ENCODE measurements at regions of chr19 and their contacts with region 1.

Region 1: DNA sequence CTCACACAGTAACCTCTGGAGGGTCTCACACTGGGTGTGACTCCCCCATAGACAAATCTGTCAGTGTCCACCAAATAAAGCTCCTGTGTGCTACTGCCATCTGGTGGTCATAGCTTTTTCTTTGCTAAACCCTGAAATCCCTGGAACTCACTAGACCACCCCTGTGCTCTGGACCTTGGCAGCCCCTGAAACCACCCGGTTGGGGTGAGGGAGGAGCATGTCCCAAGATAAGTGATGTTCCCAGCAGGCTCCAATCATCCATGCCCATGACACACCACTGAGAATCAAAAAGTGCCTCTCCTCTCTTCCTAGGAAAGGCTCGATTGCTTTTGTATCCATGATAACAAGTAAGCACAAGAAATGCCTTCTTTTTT is 6.5 kb upstream of the HSD17B14 start:
- DNase-seq: peak; percentile 6 to 58 (median 49)
- H3K4me3 ChIP-seq: no peak overlapping the region
- H3K4me3 Mint-ChIP-seq: no peak overlapping the region
- H3K27ac ChIP-seq: no peak overlapping the region
- H3K27ac Mint-ChIP-seq: peak overlapping the region in 1 of 8 donors; percentile 90
- H3K4me1 ChIP-seq: no peaks in the 10 kb centered on the region
- H3K4me1 Mint-ChIP-seq: peaks cover 2 to 5% (median 5%) of the 10 kb centered on the region in 3 donors
- H3K27me3 ChIP-seq: no peaks in the 10 kb centered on the region
- H3K27me3 Mint-ChIP-seq: no peaks in the 10 kb centered on the region

Region 2: GRCh38 chr19:48646001-48646721 is 196.6 kb before region 1 on chr19 and contains the start of gene CA11:
- CTCF ChIA-PET with region 1: interaction called, 13 read pairs
- POLR2A ChIA-PET with region 1: no interaction called
- DNase-seq: peak; percentile 87 to 94 (median 90)
- H3K4me3 ChIP-seq: peak within 1 kb of the TSS; percentile 90
- H3K4me3 Mint-ChIP-seq: peak within 1 kb of the TSS; percentile 85 to 95 (median 87)
- H3K27ac ChIP-seq: peak within 1 kb of the TSS; percentile 52
- H3K27ac Mint-ChIP-seq: peak within 1 kb of the TSS; percentile 85 to 97 (median 93)
- H3K4me1 ChIP-seq: peaks cover 40% of the 10 kb centered on the region
- H3K4me1 Mint-ChIP-seq: peaks cover 36 to 57% (median 42%) of the 10 kb centered on the region in 3 donors
- H3K27me3 ChIP-seq: no peaks in the 10 kb centered on the region
- H3K27me3 Mint-ChIP-seq: no peaks in the 10 kb centered on the region
- total RNA-seq, gene CA11: 12.7 to 13.0 TPM

Region 3: GRCh38 chr19:48784540-48784939 is 58.2 kb before region 1 on chr19:
- CTCF ChIA-PET with region 1: interaction called, 67 read pairs
- POLR2A ChIA-PET with region 1: interaction called, 15 read pairs
- DNase-seq: no peak
- H3K4me3 ChIP-seq: no peak overlapping the region
- H3K4me3 Mint-ChIP-seq: no peak overlapping the region
- H3K27ac ChIP-seq: no peak overlapping the region
- H3K27ac Mint-ChIP-seq: no peak overlapping the region
- H3K4me1 ChIP-seq: no peaks in the 10 kb centered on the region
- H3K4me1 Mint-ChIP-seq: peaks cover 3 to 4% (median 4%) of the 10 kb centered on the region in 3 donors
- H3K27me3 ChIP-seq: no peaks in the 10 kb centered on the region
- H3K27me3 Mint-ChIP-seq: peaks cover 17 to 24% of the 10 kb centered on the region in 2 donors

Region 4: DNA sequence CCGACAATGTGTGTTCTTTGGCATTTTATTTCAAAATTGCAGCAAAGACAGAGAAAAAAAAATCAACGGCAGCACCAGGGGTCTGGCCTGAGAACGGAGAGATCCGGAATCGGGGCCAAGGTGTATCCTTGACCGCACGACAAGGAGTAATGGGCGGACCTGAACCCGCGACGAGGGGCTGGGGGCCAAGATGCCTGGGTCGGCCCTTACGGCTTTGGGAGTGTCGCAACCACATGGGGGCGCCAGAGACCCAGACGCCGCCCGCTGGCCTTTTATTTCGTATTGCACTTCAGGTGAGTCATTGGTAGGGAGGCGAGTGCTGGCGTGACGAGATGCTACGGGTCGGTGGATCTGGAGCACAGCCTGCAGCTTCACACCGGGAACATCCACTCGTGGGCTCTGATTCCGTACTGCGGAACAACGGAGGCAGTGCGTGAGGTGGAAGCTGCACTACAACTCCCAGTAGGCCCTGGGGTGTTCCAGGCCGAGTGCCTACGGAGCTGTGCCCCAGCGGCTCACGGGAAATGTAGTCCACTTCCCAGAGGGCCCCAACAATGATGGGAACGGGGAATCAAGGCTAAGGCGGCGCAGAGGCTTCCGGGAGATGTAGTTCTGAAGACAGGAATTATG is 47.6 kb before region 1 on chr19:
- CTCF ChIA-PET with region 1: interaction called, 67 read pairs
- POLR2A ChIA-PET with region 1: no interaction called
- DNase-seq: peak; percentile 71 to 89 (median 83)
- H3K4me3 ChIP-seq: peak overlapping the region; percentile 96
- H3K4me3 Mint-ChIP-seq: peak overlapping the region; percentile 85 to 98 (median 96)
- H3K27ac ChIP-seq: peak overlapping the region; percentile 45
- H3K27ac Mint-ChIP-seq: peak overlapping the region; percentile 48 to 96 (median 94)
- H3K4me1 ChIP-seq: peaks cover 6% of the 10 kb centered on the region
- H3K4me1 Mint-ChIP-seq: peaks cover 5 to 14% (median 8%) of the 10 kb centered on the region in 3 donors
- H3K27me3 ChIP-seq: no peaks in the 10 kb centered on the region
- H3K27me3 Mint-ChIP-seq: no peaks in the 10 kb centered on the region

Region 5: GRCh38 chr19:48812094-48812929 is 30.5 kb before region 1 on chr19:
- CTCF ChIA-PET with region 1: interaction called, 11 read pairs
- POLR2A ChIA-PET with region 1: no interaction called
- DNase-seq: peak; percentile 35 to 66 (median 55)
- H3K4me3 ChIP-seq: no peak overlapping the region
- H3K4me3 Mint-ChIP-seq: peak overlapping the region; percentile 76 to 91 (median 82)
- H3K27ac ChIP-seq: peak overlapping the region; percentile 59
- H3K27ac Mint-ChIP-seq: peak overlapping the region; percentile 38 to 82 (median 68)
- H3K4me1 ChIP-seq: peaks cover 18% of the 10 kb centered on the region
- H3K4me1 Mint-ChIP-seq: peaks cover 22 to 32% (median 28%) of the 10 kb centered on the region in 3 donors
- H3K27me3 ChIP-seq: no peaks in the 10 kb centered on the region
- H3K27me3 Mint-ChIP-seq: no peaks in the 10 kb centered on the region

Region 6: DNA sequence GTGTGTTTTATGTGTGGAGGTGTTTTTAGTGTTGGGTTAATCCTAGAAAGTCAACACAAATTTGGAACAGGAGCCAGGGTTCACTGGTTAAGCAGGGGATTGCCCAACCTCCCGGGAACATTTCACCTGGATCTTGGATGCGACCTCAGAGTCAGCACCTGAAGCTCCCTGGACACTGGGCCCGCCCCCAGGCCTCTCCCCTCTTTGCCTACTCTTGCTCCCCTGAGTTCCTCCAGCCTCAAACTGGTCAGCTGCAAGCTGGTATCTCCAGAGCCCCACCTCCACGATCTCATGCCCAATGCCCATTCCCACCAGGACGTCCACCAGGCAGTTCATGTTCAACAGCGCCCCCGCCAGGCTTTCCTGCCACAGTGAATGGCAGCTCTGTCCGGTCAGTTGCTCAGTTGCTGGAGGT is 16.2 kb before region 1 on chr19:
- CTCF ChIA-PET with region 1: interaction called, 11 read pairs
- POLR2A ChIA-PET with region 1: no interaction called
- DNase-seq: no peak
- H3K4me3 ChIP-seq: no peak overlapping the region
- H3K4me3 Mint-ChIP-seq: no peak overlapping the region
- H3K27ac ChIP-seq: no peak overlapping the region
- H3K27ac Mint-ChIP-seq: no peak overlapping the region
- H3K4me1 ChIP-seq: no peaks in the 10 kb centered on the region
- H3K4me1 Mint-ChIP-seq: no peaks in the 10 kb centered on the region
- H3K27me3 ChIP-seq: no peaks in the 10 kb centered on the region
- H3K27me3 Mint-ChIP-seq: no peaks in the 10 kb centered on the region

Region 7: DNA sequence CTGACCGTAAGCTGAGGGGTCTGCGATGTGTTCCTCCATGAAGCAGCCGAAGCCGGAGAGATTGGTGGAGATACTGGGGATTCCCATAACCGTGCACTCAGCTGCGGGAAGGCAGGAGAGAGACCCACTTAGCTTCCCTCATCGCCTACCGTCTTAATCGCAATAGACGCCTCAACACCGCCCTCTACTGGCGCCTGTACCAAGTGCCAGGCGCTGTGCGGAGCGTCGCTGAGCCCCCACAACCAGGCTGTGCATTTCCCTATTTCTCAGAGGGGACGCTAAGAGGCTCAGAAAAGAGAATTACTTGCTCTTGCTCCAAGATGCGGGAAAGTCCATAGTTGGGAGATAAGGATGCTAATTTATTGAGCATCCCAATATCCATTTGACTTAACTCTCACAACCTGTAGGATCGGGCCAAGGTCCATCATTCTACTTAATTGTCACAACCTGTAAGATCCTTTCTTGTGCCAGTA is 128.2 kb after region 1 on chr19:
- CTCF ChIA-PET with region 1: interaction called, 40 read pairs
- POLR2A ChIA-PET with region 1: interaction called, 3 read pairs
- DNase-seq: peak; percentile 59 to 84 (median 72)
- H3K4me3 ChIP-seq: no peak overlapping the region
- H3K4me3 Mint-ChIP-seq: no peak overlapping the region
- H3K27ac ChIP-seq: no peak overlapping the region
- H3K27ac Mint-ChIP-seq: peak overlapping the region in 4 of 8 donors; percentile 13 to 56 (median 21)
- H3K4me1 ChIP-seq: peaks cover 12% of the 10 kb centered on the region
- H3K4me1 Mint-ChIP-seq: peaks cover 16 to 29% (median 23%) of the 10 kb centered on the region in 3 donors
- H3K27me3 ChIP-seq: no peaks in the 10 kb centered on the region
- H3K27me3 Mint-ChIP-seq: peaks cover 0 to 1% of the 10 kb centered on the region in 2 donors

Measured in CD8-positive, alpha-beta memory T cell (primary cell).